Calu3 (cell line): ENCODE measurements at regions of chr1 and their contacts with region 1.

Region 1: DNA sequence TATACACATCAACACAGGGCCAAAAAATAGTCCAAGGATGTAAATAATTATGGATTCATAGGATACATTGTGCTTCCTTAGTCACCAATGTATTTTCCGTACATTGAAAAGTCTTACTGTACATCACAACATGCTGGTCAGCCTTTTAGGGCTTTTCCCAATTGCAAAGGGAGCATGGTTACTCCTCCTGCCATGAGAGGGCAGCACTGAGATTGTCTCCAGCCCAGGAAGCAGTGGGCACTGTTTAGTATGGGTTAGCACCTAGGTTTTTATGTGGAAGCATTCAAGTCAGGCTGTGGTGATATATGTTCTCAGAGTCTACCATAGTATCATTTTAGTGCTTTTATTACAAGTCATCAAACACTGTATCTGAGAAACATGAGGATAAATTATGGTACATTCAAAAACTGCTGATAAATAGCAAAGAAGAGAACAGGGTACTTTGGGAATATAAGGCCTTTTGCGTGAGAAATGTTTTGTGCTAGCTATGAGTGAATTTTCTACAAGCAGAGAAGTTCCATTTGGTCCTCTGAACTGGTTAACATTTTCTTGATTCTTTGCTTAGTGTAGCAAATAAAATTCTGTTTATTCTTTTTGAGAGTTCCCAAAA is 34.0 kb downstream of the ST6GALNAC5 start:
- DNase-seq: peak; percentile 60
- H3K4me3 Mint-ChIP-seq: no peak overlapping the region
- H3K27ac Mint-ChIP-seq: no peak overlapping the region
- H3K4me1 Mint-ChIP-seq: no peaks in the 10 kb centered on the region
- H3K27me3 Mint-ChIP-seq: peaks cover 9% of the 10 kb centered on the region
- CTCF ChIP-seq: peak; percentile 56

Region 2: GRCh38 chr1:76770979-76771378 is 130.3 kb before region 1 on chr1:
- CTCF ChIA-PET with region 1: no interaction called
- intact Hi-C with region 1: no loop called
- DNase-seq: no peak
- H3K4me3 Mint-ChIP-seq: no peak overlapping the region
- H3K27ac Mint-ChIP-seq: no peak overlapping the region
- H3K4me1 Mint-ChIP-seq: no peaks in the 10 kb centered on the region
- H3K27me3 Mint-ChIP-seq: peaks cover 51% of the 10 kb centered on the region
- CTCF ChIP-seq: no peak

Region 3: GRCh38 chr1:76942549-76942948 is 41.3 kb after region 1 on chr1:
- CTCF ChIA-PET with region 1: no interaction called
- intact Hi-C with region 1: loop called (anchors 5 kb)
- DNase-seq: no peak
- H3K4me3 Mint-ChIP-seq: no peak overlapping the region
- H3K27ac Mint-ChIP-seq: no peak overlapping the region
- H3K4me1 Mint-ChIP-seq: no peaks in the 10 kb centered on the region
- H3K27me3 Mint-ChIP-seq: no peaks in the 10 kb centered on the region
- CTCF ChIP-seq: no peak

Region 4: DNA sequence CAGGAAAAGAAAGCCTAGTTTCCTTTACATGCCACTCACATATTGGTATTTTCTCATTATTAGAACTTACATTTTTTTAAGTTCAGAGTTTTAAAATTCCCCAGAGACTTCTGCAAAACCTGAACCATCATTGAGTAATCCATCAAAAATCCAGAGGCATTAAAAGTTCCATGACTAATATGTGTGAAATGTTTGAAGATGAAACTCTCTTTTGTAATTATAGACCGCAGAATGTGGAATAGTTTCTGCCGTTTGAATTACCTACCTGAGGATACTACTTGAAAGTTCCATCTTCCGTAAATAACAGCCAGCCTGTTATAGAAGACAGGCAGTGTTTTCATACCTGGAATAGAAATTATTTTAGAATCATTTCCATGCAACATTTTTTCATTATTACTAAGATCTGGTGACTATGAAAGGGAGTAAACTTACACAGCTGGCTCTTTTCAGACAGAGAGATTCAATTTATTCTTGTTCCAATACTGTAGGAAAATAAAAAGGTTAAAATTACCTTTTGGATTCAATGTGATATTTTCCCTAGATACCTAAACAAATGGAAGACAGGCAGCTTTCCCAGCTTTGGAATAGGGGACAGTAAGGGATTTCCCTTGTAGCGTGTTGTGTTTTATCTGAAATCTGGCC is 97.4 kb after region 1 on chr1:
- CTCF ChIA-PET with region 1: no interaction called
- intact Hi-C with region 1: loop called (anchors 2 kb)
- DNase-seq: no peak
- H3K4me3 Mint-ChIP-seq: no peak overlapping the region
- H3K27ac Mint-ChIP-seq: peak overlapping the region; percentile 77
- H3K4me1 Mint-ChIP-seq: peaks cover 13% of the 10 kb centered on the region
- H3K27me3 Mint-ChIP-seq: no peaks in the 10 kb centered on the region
- CTCF ChIP-seq: no peak

Region 5: DNA sequence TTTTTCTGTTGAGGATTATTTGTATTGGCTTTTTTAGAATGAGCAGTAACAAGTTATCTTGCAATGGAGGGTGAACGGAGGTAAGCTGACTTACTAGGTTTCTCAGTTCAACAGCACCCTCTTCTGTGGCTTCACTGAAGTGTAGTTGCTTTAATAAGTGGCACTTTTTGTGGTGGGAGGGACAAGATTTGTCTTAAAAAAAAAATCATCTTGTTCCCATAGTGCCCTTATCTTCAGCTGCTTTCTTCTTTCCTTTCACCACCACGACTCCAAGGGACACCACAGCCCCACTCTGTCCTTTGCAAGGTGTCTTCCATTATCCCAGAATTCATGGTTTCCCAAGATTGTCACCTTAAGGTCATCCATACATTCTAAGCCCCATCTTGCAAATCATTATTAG is 225.0 kb after region 1 on chr1:
- CTCF ChIA-PET with region 1: no interaction called
- intact Hi-C with region 1: loop called (anchors 1 kb)
- DNase-seq: peak; percentile 39
- H3K4me3 Mint-ChIP-seq: no peak overlapping the region
- H3K27ac Mint-ChIP-seq: no peak overlapping the region
- H3K4me1 Mint-ChIP-seq: no peaks in the 10 kb centered on the region
- H3K27me3 Mint-ChIP-seq: no peaks in the 10 kb centered on the region
- CTCF ChIP-seq: peak; percentile 19